ENCODE measurements at regions of chr3 and their contacts with region 1.

Region 1: DNA sequence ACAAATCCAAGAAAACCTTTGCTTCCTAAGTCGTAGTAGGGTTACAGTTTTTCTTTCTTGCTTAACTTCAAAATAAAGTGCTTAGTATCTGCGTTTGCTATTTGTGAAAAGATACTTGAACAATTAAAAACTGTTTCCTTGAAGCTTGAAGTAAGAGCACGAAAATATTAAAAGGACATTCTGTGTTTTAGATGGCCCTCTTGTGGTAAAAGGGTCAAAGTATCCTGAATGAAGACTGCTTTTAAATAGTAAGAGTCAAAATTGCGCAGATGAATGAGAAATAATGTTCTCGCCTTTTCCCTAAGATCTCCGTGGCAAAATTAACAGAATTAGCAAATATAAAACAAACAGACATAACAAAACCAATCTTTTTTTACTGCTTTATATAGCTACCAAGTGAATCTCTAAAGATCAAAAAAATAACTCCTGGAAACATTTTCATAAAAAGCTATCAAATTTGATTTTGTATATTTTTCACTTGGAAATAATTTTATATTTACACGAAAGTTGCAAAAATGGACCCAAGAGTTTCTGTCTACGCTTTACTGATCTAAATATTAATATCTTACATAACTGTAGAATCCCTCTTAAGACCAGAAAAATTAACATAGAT is 175.4 kb downstream of the MBNL1 start:
- DNase-seq: peak in 5 of 9 donors; percentile 31 to 42 (median 36)
- ATAC-seq: peak; percentile 60
- H3K4me3 ChIP-seq: no peak overlapping the region
- H3K4me3 Mint-ChIP-seq: peak overlapping the region in 6 of 10 donors; percentile 0 to 45 (median 26)
- H3K27ac ChIP-seq: peak overlapping the region; percentile 50
- H3K27ac Mint-ChIP-seq: peak overlapping the region; percentile 2 to 68 (median 56)
- H3K4me1 ChIP-seq: peaks cover 24 to 27% of the 10 kb centered on the region in 2 donors
- H3K4me1 Mint-ChIP-seq: peaks cover 49 to 90% (median 78%) of the 10 kb centered on the region in 7 donors
- H3K27me3 ChIP-seq: no peaks in the 10 kb centered on the region
- H3K27me3 Mint-ChIP-seq: no peaks in the 10 kb centered on the region

Region 2: GRCh38 chr3:152071924-152072323 is 372.2 kb before region 1 on chr3:
- CTCF ChIA-PET with region 1: interaction called, 5 read pairs
- POLR2A ChIA-PET with region 1: no interaction called
- intact Hi-C with region 1: loop called (anchors 1 kb)
- DNase-seq: peak in 6 of 9 donors; percentile 10 to 43 (median 32)
- ATAC-seq: peak; percentile 75
- H3K4me3 ChIP-seq: no peak overlapping the region
- H3K4me3 Mint-ChIP-seq: no peak overlapping the region
- H3K27ac ChIP-seq: no peak overlapping the region
- H3K27ac Mint-ChIP-seq: no peak overlapping the region
- H3K4me1 ChIP-seq: peaks cover 0 to 5% of the 10 kb centered on the region in 2 donors
- H3K4me1 Mint-ChIP-seq: peaks cover 0 to 6% (median 3%) of the 10 kb centered on the region in 7 donors
- H3K27me3 ChIP-seq: no peaks in the 10 kb centered on the region
- H3K27me3 Mint-ChIP-seq: peaks cover 0 to 6% (median 0%) of the 10 kb centered on the region in 5 donors

Region 3: GRCh38 chr3:152825566-152825965 is 381.4 kb after region 1 on chr3:
- CTCF ChIA-PET with region 1: no interaction called
- POLR2A ChIA-PET with region 1: no interaction called
- intact Hi-C with region 1: no loop called
- DNase-seq: no peak
- ATAC-seq: no peak
- H3K4me3 ChIP-seq: no peak overlapping the region
- H3K4me3 Mint-ChIP-seq: no peak overlapping the region
- H3K27ac ChIP-seq: no peak overlapping the region
- H3K27ac Mint-ChIP-seq: no peak overlapping the region
- H3K4me1 ChIP-seq: no peaks in the 10 kb centered on the region
- H3K4me1 Mint-ChIP-seq: no peaks in the 10 kb centered on the region
- H3K27me3 ChIP-seq: no peaks in the 10 kb centered on the region
- H3K27me3 Mint-ChIP-seq: peaks cover 0 to 10% (median 6%) of the 10 kb centered on the region in 5 donors